ENCODE measurements at regions of chr16 and their contacts with region 1.

Region 1: DNA sequence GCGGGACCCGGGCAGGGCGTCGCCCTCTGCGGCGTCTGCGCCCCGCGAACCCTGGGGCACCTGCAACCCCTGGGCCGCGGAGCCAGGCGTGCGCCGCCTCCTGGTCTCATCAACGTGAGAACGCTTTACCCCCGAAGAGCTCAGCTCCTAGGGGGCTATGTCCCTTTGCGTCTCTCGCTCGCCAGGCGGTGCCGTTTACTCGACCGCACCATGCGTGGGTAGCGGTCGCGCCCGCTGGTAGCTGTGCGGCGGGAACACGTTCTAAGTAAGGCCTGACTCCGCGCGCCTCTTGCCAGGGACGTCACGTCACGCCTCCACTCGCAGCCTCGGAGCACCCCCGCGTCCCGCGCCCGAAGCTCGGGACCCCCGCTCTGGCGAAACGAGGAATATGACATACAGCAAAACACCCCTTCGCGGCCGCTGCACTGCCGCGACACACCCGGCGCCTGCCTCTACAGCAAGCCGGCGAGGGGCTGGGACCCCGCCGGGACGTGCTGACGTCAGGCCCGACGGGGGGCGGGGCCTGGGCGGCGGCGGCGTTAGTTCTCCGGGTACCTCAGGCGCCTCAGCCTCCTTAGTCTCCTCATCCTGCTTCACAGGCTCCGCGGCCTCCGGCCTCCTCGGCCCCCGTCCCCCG is at the start of gene RAB11FIP3:
- DNase-seq: peak; percentile 89 to 93 (median 92)
- ATAC-seq: peak; percentile 93
- H3K4me3 ChIP-seq: peak within 1 kb of the TSS; percentile 49
- H3K27ac ChIP-seq: peak within 1 kb of the TSS; percentile 38
- H3K4me1 ChIP-seq: peaks cover 12 to 40% of the 10 kb centered on the region in 2 experiments; a peak in 3 of 5 replicates
- H3K27me3 ChIP-seq: no peaks in the 10 kb centered on the region
- CTCF ChIP-seq: peak; percentile 36 to 50 (median 44); a peak in 4 of 6 replicates
- EP300 ChIP-seq: no peak
- POLR2A ChIP-seq: peak; percentile 76
- RAD21 ChIP-seq: peak in 1 of 2 experiments; percentile 25; a peak in 2 of 4 replicates
- polyA plus RNA-seq, gene RAB11FIP3: 0.46 TPM

Region 2: DNA sequence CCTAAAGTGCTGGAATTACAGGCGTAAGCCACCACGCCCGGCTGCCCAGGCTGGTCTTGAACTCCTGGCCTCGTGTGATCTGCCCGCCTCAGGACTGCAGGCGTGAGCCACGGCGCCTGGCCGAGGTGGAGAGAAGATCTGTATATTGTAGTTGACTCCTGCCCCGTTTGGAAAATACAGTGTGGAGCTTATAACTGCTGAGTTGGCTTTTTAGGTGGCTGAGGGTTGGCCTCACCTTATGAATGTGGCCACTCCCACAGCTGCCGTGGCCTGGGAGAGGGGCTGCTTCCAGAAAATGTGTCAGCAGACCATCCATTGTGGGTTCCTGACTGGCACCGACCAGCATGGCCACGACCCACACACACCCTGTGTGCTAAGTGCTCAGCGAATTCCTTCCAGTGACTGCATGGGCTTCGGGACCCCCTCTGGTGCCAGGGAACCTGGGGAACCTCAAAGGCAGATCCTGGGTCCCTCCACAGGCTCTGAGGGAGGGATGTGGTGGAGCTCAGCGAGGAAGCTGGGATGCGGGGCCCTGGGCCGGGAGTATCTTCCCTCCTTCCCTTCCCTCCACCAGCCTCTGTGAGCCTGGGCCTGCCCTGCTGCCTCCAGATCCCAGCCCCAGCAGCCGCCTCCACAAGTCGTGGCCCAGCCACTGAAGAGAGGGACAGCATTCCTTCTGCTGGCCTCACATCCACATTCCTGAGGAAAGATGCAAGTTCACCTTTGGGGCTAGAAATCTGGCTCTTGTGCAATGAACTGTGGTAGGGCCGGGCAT is 10.6 kb before region 1 on chr16:
- CTCF ChIA-PET with region 1: no interaction called
- POLR2A ChIA-PET with region 1: interaction called, 13 read pairs
- in situ Hi-C with region 1: no loop called
- intact Hi-C with region 1: no loop called
- DNase-seq: peak in 1 of 4 experiments; percentile 4
- ATAC-seq: no peak
- H3K4me3 ChIP-seq: no peak overlapping the region
- H3K27ac ChIP-seq: no peak overlapping the region
- H3K4me1 ChIP-seq: peaks cover 0 to 32% of the 10 kb centered on the region in 2 experiments; a peak in 2 of 5 replicates
- H3K27me3 ChIP-seq: no peaks in the 10 kb centered on the region
- CTCF ChIP-seq: no peak
- EP300 ChIP-seq: no peak
- POLR2A ChIP-seq: no peak
- RAD21 ChIP-seq: no peak

Region 3: GRCh38 chr16:483341-484075 is 58.3 kb after region 1 on chr16:
- CTCF ChIA-PET with region 1: no interaction called
- POLR2A ChIA-PET with region 1: no interaction called
- in situ Hi-C with region 1: no loop called
- intact Hi-C with region 1: loop called (anchors 10 kb)
- DNase-seq: peak in 1 of 4 experiments; percentile 37
- ATAC-seq: peak; percentile 55
- H3K4me3 ChIP-seq: no peak overlapping the region
- H3K27ac ChIP-seq: no peak overlapping the region
- H3K4me1 ChIP-seq: peaks cover 11 to 38% of the 10 kb centered on the region in 2 experiments; a peak in 4 of 5 replicates
- H3K27me3 ChIP-seq: no peaks in the 10 kb centered on the region
- CTCF ChIP-seq: no peak
- EP300 ChIP-seq: no peak
- POLR2A ChIP-seq: no peak
- RAD21 ChIP-seq: no peak

Measured in K562 (cell line).